Right lobe of liver (tissue), 6 donors: ENCODE measurements at regions of chr1 and their contacts with region 1.

Region 1: DNA sequence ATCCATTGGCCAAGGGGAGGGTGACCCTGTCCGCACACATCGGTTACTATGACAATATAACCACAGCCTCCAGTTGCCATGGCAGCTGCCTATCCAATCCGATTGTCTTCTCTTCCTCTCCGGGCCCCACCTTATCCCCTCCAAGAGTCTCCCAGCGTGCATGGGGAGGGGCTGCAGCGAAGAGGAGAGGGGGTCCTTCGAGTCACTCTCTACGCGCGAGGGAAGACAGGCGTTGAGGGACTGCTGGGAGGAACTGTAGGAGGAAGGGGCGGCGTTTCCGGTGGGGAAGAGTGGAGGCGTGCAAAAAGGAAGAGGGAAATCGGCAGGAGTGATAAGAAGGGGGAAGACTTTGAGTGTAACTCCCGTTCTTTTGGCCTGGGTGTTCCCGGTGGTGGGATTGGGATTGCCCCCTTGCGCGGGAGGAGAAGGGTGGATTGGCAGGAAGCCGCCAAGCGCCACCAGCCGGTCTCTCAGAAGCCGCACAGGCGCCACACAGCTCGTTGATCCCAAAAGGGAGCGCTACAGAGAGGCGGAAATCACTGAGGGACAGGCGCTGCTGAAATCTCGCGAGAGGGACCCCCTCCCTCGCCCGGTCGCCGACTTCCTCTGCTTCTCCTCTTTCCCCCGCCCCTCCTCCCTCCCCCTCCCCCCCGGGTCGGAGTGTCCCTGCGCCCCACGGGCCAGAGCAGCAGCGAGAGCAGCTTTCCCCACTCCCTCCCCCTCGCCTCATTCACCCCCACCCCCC is 384 bp upstream of the SMG7 start:
- DNase-seq: peak; percentile 98 to 99 (median 99)
- ATAC-seq: peak; percentile 73 to 85 (median 79)
- H3K4me3 ChIP-seq: peak overlapping the region; percentile 67 to 95 (median 91)
- H3K27ac ChIP-seq: peak overlapping the region; percentile 92 to 98 (median 98)
- H3K4me1 ChIP-seq: peaks cover 0 to 35% (median 5%) of the 10 kb centered on the region in 4 donors
- H3K27me3 ChIP-seq: no peaks in the 10 kb centered on the region
- CTCF ChIP-seq: peak in 1 of 4 donors; percentile 11
- POLR2A ChIP-seq: no peak

Region 2: DNA sequence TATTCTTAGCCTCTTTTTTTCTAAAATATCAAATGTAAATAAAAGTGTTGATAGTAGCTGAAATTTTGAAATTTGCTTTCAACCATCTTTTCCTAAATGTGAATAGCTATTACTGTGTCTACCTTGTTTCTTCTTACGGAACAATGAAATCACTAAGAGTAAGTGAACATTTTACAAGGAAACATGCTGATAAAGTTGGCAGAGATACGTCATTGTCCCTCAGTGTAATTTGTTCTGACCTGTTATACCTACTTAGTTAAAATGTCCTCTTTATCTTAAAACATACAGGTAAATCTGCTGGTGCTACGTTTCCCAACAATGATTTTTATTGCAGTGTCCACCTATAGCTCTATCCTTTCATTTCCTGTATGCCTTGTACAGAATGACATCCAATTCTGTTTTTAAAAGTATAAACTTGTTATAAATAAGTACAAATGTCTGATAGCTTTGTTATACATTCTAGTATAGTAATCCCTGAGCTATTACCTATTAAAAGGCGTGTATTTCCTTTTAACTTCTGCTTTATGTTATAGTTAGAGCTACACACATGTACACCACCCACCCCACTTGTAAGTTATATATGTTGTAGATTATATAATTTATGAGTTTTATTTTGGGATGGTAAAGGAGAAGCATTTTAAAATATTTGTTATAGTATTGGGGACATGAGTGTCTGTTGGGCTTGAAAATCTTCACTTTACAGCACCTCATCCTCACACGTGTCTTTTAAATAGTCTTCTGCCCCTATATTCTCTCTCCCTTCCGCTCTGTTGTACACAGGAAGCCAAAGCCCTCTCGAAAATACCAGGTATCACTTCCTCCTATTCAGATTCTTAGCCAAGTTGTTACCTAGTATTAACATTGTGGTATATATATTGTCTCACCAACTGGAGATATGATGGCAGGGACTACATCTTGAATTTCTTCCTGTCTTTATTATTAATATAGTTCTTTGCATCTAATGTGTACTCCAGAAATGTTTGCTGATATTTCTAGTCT is 423.5 kb before region 1 on chr1:
- intact Hi-C with region 1: no loop called
- DNase-seq: no peak
- ATAC-seq: no peak
- H3K4me3 ChIP-seq: no peak overlapping the region
- H3K27ac ChIP-seq: no peak overlapping the region
- H3K4me1 ChIP-seq: peaks cover 0 to 15% (median 5%) of the 10 kb centered on the region in 4 donors
- H3K27me3 ChIP-seq: no peaks in the 10 kb centered on the region
- CTCF ChIP-seq: no peak
- POLR2A ChIP-seq: no peak

Region 3: DNA sequence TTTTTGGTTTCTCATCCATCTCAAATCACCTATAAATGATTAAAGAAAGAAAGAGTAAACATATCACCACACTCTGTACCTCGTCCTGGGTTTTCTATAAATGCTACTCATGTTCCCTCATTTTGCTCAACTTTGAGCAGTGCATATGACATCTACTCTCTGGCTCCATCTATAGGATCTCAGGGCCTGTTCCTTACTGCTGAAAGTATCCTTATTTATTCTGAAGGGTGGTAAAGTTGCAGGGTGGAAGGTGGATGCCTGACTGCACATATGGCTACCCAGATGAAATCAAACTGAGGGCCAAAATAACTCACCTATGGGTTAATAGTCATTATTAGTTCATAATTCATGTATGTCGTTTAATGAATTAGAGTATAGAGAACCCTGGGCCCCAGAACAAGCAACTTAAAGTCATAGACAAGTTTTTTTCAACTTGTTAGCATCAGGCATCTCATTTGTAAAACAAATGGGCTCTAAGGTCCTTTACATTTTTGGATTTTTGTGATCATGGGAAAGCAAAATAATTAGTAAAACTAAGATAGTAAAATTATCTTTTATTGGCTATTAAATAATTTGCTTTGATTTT is 71.8 kb after region 1 on chr1:
- intact Hi-C with region 1: loop called in 1 of 2 experiments (anchors 5 kb)
- DNase-seq: no peak
- ATAC-seq: peak; percentile 87 to 91 (median 88)
- H3K4me3 ChIP-seq: no peak overlapping the region
- H3K27ac ChIP-seq: no peak overlapping the region
- H3K4me1 ChIP-seq: no peaks in the 10 kb centered on the region
- H3K27me3 ChIP-seq: no peaks in the 10 kb centered on the region
- CTCF ChIP-seq: peak; percentile 48 to 64 (median 55)
- POLR2A ChIP-seq: no peak

Region 4: DNA sequence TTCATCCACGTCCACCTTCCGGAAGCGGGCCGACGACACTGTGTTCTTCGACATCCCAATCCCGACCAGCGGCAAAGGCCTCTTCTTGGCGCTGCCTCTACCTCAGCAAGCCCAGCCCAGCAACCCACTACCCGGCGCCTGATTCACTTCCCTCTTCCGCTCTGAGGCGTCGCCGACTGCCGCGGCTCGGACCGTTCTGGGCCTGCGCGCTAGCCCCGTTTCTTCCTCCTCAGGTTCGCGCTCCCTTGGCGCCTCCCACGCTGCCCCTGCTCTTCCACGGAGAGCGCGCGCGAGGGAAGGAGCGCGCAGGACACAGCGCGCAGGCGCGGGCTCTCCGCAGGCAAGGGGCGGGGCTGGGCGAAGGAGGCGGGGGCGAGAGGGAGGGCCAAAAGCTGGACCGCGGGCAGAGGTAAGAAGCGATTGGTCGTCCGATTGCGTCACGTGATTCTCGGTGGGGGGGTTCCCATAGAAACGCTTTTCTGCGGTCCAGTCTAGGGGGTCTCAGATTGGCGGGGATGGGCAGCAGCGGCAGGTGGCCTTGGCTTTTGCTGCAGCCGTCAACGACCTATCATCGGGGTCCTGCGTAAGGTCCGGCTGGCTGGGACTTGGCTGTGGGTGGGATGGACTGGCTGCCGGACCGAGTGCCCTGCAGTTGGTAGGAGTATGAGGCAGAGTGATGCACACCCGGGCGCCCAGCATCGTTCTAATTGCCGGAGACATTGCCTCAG is 163.9 kb after region 1 on chr1 and contains the start of gene ARPC5:
- intact Hi-C with region 1: loop called in 1 of 2 experiments (anchors 10 kb)
- DNase-seq: peak; percentile 98
- ATAC-seq: peak; percentile 87 to 96 (median 91)
- H3K4me3 ChIP-seq: peak within 1 kb of the TSS; percentile 69 to 83 (median 72)
- H3K27ac ChIP-seq: peak within 1 kb of the TSS; percentile 77 to 90 (median 84)
- H3K4me1 ChIP-seq: peaks cover 0 to 57% (median 12%) of the 10 kb centered on the region in 4 donors
- H3K27me3 ChIP-seq: no peaks in the 10 kb centered on the region
- CTCF ChIP-seq: no peak
- POLR2A ChIP-seq: peak; percentile 96
- total RNA-seq, gene ARPC5: 23.6 to 70.5 (median 41.3) TPM